Panc1 (cell line): ENCODE measurements at regions of chr12 and their contacts with region 1.

Region 1: GRCh38 chr12:92259852-92260251 is 114.2 kb upstream of the BTG1 start:
- DNase-seq: no peak
- ATAC-seq: no peak
- H3K4me3 ChIP-seq: no peak overlapping the region
- H3K27ac ChIP-seq: no peak overlapping the region
- H3K4me1 ChIP-seq: no peaks in the 10 kb centered on the region
- H3K27me3 ChIP-seq: no peaks in the 10 kb centered on the region
- CTCF ChIP-seq: no peak

Region 2: DNA sequence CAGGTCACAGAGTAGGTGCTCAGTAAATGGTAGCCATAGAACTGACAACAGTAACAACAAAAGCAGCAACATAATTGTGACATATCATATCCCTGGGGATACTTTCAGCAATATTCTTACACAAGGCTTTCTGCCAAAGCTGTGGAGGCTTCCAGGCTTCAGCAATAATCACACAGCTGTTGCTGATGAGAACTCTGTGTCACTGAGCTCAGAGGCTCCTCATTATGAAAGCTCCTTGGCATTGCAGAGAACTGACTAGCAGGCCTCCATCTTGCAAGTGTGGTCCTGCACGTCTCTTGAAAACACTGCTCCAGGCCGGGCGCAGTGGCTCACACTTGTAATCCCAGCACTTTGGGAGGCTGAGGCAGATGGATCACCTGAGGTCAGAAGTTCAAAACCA is 16.9 kb before region 1 on chr12:
- CTCF ChIA-PET with region 1: no interaction called
- POLR2A ChIA-PET with region 1: no interaction called
- in situ Hi-C with region 1: no loop called
- intact Hi-C with region 1: no loop called
- DNase-seq: no peak
- ATAC-seq: no peak
- H3K4me3 ChIP-seq: no peak overlapping the region
- H3K27ac ChIP-seq: no peak overlapping the region
- H3K4me1 ChIP-seq: no peaks in the 10 kb centered on the region
- H3K27me3 ChIP-seq: no peaks in the 10 kb centered on the region
- CTCF ChIP-seq: no peak

Region 3: DNA sequence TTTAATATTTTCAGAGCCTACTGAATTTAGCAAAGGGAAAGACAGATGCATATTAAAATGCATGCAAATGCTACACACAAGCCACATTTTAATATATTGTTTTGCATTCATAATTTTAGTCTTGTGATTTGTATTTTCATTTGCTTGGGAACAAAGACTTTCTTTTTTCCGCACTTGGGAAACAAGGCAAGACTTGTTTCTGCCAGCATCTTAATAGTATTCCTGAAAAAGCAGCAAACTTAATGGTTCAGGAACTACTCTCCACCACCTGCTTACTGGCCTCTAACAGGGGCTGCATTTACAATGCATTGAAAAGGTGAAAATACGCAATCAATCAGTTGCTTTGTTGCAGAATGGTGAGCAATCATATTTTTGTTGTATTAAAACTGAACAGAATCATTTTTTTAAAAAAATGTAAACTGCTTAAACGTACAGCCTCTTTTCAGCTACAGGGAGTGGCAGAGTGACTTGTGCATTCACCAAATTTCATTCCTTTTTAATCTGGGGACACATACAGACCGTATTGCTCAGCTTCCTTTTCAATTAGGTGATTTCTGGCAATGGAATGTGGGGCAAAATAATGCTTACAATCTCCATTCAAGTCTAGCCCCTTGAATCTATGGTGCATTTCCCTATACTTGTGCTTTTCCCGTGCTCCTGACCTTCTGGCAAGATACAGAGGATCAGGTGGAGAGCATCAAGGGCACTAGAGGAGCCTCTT is 29.9 kb after region 1 on chr12:
- CTCF ChIA-PET with region 1: no interaction called
- POLR2A ChIA-PET with region 1: interaction called, 10 read pairs
- in situ Hi-C with region 1: no loop called
- intact Hi-C with region 1: no loop called
- DNase-seq: no peak
- ATAC-seq: no peak
- H3K4me3 ChIP-seq: no peak overlapping the region
- H3K27ac ChIP-seq: no peak overlapping the region
- H3K4me1 ChIP-seq: no peaks in the 10 kb centered on the region
- H3K27me3 ChIP-seq: no peaks in the 10 kb centered on the region; the same call in 1 of the 2 replicates
- CTCF ChIP-seq: no peak